Endothelial cell of umbilical vein (primary cell): ENCODE measurements at regions of chr2 and their contacts with region 1.

Region 1: DNA sequence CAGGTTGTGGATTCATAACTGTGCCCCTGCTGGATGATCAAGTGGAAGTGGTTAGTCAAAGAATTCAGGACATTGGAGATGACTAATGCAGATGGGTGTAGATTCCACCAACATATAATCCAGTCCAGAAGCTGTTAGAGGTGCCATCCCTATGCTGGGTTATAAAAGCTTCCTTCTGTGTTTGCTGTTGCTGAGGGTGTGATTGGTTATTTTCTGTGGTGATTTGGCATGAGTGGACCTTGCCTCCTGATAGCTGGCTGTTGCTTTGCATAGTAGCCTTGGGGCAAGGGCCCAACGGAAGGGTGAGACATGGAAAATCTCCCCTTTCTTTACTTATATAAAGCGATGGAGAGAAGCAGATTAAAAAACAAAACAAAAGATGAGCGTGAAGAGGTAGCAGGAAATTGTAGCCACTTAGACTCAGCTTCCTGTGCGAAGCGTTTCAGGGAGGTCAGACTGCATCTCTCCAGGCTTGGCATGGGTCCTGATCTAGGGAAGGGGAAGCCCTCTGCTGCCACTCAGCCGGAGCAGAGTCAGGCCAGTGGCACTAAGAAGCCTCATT is 190.4 kb downstream of the FMNL2 start:
- DNase-seq: peak; percentile 87
- H3K4me3 ChIP-seq: peak overlapping the region in 1 of 3 experiments; percentile 2
- H3K27ac ChIP-seq: peak overlapping the region; percentile 69
- H3K4me1 ChIP-seq: peaks cover 39% of the 10 kb centered on the region
- H3K27me3 ChIP-seq: no peaks in the 10 kb centered on the region
- CTCF ChIP-seq: no peak
- POLR2A ChIP-seq: no peak

Region 2: GRCh38 chr2:152505495-152505906 is 19.9 kb before region 1 on chr2:
- CTCF ChIA-PET with region 1: interaction called, 13 read pairs
- POLR2A ChIA-PET with region 1: interaction called, 3 read pairs
- dilution Hi-C with region 1: no loop called
- intact Hi-C with region 1: loop called (anchors 1 kb)
- DNase-seq: peak; percentile 82
- H3K4me3 ChIP-seq: no peak overlapping the region
- H3K27ac ChIP-seq: peak overlapping the region; percentile 41
- H3K4me1 ChIP-seq: peaks cover 36% of the 10 kb centered on the region
- H3K27me3 ChIP-seq: no peaks in the 10 kb centered on the region
- CTCF ChIP-seq: no peak
- POLR2A ChIP-seq: no peak

Region 3: DNA sequence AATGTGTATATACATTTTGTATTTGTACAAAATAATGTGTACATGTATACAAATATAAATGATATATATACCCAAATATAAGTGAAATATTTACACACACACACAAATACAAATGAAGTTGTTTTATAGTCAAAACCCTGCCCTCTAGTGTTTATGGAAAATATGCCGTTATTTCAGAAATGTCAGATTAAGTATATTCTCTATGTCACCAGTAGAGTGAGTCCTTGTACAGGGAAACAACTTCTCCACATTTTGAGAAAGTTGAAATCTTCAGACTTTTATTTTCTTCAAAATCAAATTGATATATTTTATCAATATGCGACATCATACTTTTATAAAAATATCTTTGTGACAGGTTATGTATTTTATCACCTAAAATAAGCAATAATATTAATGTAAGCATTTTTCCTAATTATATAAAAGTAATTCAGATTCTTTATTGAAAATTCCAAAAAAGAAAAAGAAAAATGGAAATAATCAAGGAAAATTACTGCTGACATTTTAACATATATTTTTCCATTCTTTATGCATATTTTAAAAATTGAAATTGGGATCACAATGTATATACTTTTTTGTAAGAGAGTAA is 215.5 kb after region 1 on chr2:
- CTCF ChIA-PET with region 1: no interaction called
- POLR2A ChIA-PET with region 1: no interaction called
- dilution Hi-C with region 1: no loop called
- intact Hi-C with region 1: no loop called
- DNase-seq: peak; percentile 78
- H3K4me3 ChIP-seq: no peak overlapping the region
- H3K27ac ChIP-seq: no peak overlapping the region
- H3K4me1 ChIP-seq: peaks cover 5% of the 10 kb centered on the region
- H3K27me3 ChIP-seq: no peaks in the 10 kb centered on the region
- CTCF ChIP-seq: peak; percentile 52
- POLR2A ChIP-seq: no peak